GM18951 (cell line): ENCODE measurements at regions of chr1 and their contacts with region 1.

Region 1: GRCh38 chr1:3624200-3625136 is at the start of gene TPRG1L:
- POLR2A ChIP-seq: peak; percentile 48

Region 2: DNA sequence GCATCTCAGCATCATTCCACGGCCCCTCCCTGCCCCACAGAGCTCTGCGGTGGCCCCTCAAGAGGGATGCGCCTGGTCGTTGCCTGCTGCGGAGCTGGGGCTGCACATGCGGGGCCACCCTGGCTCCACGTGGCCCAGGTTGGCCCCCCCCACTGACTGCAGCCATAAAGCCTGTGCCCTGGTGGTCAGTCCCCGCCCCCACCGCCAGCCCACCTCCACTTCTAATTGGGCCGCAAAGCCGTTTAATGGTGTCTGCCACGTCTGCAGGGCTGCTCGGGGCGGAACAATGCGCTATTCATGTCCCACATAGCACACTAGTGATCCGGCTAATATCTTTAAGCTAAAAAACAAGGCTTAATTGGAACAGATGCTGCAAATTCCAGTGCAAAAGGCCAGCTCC is 636.7 kb before region 1 on chr1:
- in situ Hi-C with region 1: no loop called
- POLR2A ChIP-seq: no peak

Region 3: DNA sequence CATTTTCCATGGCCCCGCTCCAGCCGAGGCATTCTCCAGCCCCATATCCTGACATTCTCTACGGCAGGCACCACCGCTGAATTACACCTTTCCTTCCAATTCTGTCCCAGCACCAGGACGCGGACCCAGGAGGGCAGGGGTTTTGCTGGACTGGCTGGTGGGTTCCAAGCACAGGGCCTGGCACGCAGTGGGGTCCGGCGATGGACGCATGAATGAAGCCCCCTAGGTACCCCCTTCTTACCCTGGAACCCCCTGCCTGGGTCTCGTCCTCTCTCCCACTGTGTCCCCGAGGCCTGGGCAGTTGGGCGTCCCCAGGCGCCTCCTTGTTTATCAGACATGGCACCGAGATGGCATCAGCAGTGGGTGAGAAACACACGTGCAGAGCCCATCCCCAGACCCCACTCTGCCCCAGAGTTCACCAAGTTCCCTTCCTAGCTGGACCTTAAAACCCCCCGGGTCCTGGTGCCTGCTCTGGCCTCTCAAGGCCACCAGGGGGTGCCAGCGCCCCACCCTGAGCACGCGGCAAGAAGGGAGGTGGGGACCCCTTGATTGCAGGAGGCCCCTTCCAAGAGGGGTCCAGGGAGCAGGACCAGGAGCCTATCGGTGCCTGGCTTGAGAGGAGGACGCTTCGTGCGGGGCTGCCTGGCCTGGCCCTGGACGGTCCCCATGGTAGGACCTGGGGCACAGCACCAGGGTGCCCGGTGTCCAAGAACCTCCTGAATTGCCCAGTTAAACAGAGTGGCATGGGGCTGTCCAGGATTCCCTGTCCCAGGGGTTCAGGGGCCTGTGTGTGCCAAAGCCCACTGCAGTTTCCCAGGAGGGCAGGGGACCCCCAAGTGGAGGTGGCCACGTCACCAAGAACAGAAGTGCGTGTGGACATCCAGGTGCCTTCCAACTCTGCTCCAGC is 59.3 kb before region 1 on chr1:
- in situ Hi-C with region 1: loop called (anchors 5 kb)
- POLR2A ChIP-seq: no peak

Region 4: DNA sequence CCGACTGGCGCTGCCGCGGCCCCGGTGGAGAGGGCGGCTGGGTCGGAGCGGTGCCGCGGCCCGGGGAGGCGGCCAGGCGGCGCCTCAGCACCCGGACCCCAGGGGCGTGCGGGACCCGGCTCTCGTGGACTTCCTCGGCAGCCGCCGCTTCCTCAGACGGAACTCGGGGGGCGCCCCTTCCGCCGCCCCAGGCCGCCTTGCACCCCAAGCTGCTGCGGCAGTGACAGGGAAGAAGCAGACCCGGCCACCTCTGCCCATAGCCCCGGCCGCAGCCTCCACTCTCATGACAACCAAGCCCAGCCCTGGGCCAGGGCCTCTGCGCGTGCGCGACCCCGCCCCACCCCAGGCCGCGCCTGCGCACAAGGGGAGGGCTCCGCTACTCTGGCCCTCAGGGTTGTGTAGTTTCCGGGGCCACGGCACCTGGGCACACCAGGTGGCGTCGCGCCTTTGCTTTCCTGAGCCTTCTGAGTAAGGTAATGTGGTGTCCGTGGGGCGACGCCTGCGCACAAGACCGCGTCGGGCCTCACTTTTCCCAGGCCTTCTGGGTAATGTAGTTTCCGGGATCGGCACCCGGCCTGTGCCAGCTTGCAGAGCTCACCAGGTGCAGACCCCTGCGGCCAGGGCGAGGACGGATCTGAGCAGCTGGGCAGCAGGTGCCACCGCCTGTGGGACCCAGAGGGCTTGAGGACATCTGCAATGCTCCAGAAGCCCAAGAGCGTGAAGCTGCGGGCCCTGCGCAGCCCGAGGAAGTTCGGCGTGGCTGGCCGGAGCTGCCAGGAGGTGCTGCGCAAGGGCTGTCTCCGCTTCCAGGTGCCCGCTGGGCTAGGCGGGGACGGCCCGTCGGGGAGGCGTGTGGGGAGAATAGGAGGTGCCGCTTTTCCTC is 232.7 kb after region 1 on chr1 and contains the starts of genes CEP104 and DFFB:
- in situ Hi-C with region 1: no loop called
- POLR2A ChIP-seq: peak; percentile 84